ENCODE measurements at regions of chr1 and their contacts with region 1.

Region 1: DNA sequence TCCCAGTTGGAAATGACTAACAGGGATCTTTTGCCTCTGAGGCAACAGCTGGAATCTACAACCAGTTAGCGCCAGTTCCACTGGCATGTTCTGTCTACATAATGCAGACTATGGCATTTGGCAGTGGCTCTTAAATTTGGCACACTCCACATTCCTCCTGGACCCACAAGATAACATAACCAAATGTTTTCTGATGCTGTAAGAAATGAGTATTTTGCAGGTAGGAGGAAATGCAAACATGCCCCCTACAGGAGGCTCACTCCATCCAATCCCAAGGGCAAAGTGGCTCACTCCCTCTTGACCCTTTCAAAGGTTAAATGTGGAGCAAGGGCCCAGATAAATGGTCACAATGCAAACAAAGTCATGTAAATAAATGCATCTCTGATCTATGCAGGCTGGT is 129.2 kb upstream of the PROX1 start:
- DNase-seq: no peak
- H3K4me3 Mint-ChIP-seq: no peak overlapping the region
- H3K27ac Mint-ChIP-seq: no peak overlapping the region
- H3K4me1 Mint-ChIP-seq: peaks cover 4% of the 10 kb centered on the region
- H3K27me3 Mint-ChIP-seq: peaks cover 1% of the 10 kb centered on the region

Region 2: DNA sequence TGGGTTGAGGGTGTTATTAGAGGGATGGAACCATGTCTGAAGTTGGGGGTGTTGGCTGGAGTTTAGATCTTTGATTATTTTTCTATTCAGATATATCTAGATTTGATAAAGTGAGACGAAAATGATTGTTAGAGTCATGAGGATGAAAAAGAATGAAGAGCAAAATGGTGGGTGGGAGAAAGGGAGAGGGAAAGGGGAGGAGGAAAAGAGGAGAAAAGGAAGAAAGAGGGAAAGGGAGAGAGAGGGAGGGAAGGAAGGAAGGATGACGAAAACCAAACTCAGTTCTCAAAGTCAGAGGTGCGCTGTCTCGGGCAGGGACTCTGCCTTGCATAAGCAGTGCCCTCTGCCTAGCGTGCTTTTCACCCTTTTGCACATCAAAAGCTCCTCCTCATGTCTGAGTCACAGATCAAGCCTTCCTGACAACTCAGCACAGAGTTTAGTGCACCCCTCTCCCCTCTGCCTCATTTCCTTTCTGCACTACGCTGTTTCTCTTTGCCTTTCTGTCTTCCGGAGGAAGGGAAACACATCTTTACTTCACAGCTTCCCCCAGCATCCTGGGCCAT is 96.7 kb before region 1 on chr1:
- CTCF ChIA-PET with region 1: no interaction called
- POLR2A ChIA-PET with region 1: no interaction called
- intact Hi-C with region 1: loop called (anchors 10 kb)
- DNase-seq: peak; percentile 55
- H3K4me3 Mint-ChIP-seq: no peak overlapping the region
- H3K27ac Mint-ChIP-seq: peak overlapping the region; percentile 16
- H3K4me1 Mint-ChIP-seq: peaks cover 10% of the 10 kb centered on the region
- H3K27me3 Mint-ChIP-seq: no peaks in the 10 kb centered on the region

Region 3: GRCh38 chr1:214086945-214087344 is 228.4 kb after region 1 on chr1:
- CTCF ChIA-PET with region 1: no interaction called
- POLR2A ChIA-PET with region 1: no interaction called
- intact Hi-C with region 1: no loop called
- DNase-seq: no peak
- H3K4me3 Mint-ChIP-seq: no peak overlapping the region
- H3K27ac Mint-ChIP-seq: no peak overlapping the region
- H3K4me1 Mint-ChIP-seq: no peaks in the 10 kb centered on the region
- H3K27me3 Mint-ChIP-seq: no peaks in the 10 kb centered on the region